Left ventricle myocardium inferior (tissue), 1 donor: ENCODE measurements at regions of chr11 and their contacts with region 1.

Region 1: DNA sequence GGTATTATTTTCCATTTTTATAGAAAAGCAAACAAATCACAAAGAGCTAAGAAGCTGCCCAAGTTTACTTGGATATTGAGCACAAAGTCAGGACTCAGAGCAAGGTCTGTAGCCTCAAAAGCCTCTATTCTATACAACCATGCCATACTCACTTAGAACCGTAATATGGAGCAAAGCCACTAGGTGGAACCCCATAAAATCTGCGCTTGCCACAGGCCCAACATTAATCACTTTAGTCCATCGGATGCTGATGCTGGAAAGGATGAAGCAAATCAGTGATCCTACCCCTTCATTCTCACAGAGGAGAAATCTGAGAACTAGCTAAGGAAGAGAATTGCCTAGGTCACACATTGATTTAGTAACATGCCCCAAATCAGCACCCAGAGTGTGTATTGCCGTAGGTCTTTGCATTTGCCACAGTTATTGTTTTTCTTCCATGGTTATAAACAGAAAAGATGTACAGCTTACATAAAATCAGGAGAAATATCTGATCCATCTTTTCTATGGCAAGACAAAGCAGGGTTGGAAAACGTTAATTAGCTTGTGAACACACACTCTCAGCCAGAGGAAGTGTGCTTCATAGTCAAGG is 56.7 kb upstream of the RAB38 start:
- DNase-seq: no peak
- H3K4me3 ChIP-seq: no peak overlapping the region
- H3K27ac ChIP-seq: no peak overlapping the region
- H3K4me1 ChIP-seq: no peaks in the 10 kb centered on the region
- H3K27me3 ChIP-seq: no peaks in the 10 kb centered on the region
- CTCF ChIP-seq: peak; percentile 66

Region 2: DNA sequence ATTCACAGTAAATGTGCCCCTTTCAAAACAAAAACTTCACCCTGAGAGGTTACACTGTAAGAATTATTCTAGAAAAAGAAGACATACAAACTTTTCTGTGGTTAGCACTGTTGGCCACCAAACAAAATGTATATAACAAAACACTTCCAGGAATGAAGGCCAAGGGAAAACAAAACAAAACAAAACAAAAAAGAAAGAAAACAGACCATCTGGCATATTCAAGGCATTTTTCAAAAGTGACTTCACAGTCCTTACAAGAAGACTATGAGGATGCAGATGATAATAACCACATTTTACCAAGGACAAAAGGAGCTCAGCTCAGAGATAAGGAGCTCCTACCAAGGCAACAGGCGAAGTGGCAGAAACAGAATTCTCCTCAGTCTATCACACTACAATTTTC is 80.6 kb after region 1 on chr11:
- intact Hi-C with region 1: no loop called
- DNase-seq: no peak
- H3K4me3 ChIP-seq: no peak overlapping the region
- H3K27ac ChIP-seq: no peak overlapping the region
- H3K4me1 ChIP-seq: no peaks in the 10 kb centered on the region
- H3K27me3 ChIP-seq: no peaks in the 10 kb centered on the region
- CTCF ChIP-seq: no peak

Region 3: GRCh38 chr11:88543902-88544655 is 312.1 kb after region 1 on chr11:
- intact Hi-C with region 1: loop called (anchors 5 kb)
- DNase-seq: peak; percentile 67
- H3K4me3 ChIP-seq: no peak overlapping the region
- H3K27ac ChIP-seq: no peak overlapping the region
- H3K4me1 ChIP-seq: no peaks in the 10 kb centered on the region
- H3K27me3 ChIP-seq: peaks cover 6% of the 10 kb centered on the region
- CTCF ChIP-seq: peak; percentile 85